Endothelial cell of umbilical vein (primary cell): ENCODE measurements at regions of chr15 and their contacts with region 1.

Region 1: DNA sequence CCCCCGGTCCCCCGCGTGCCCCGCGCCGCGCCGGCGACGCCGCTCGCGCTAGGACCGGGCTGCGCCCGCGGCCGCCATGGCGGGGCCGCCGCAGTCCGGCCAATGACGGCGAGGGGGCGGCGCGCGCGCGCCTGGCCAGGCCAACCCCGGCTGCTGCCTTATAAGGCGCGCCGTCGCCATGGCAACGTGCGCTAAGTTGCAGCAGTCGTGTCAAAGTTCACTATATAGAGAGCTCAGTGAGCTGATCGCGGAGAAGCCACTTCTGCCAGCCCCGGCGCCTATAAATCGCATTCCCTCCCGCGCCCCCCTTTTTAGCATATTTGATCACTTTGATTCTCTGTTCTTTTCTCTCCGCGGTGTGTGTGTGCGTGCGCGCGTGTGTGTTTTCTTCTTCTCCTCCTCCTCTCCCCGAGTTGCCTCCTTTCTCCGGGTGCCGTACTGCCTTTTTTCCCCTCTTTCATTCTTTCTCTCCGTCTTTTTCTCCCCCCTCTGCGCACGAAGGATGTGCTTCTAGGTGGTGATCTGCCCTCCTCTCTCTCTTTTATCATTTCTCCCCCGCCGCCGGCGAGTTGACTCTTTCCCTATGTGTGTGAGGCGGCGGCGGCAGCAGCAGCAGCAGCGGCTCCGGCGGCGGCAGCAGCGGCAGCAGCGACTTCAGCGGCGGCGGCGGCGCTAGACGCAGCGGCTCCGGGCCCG is at the start of gene NR2F2:
- DNase-seq: peak; percentile 98
- H3K4me3 ChIP-seq: peak within 1 kb of the TSS; percentile 92 to 99 (median 99)
- H3K27ac ChIP-seq: peak within 1 kb of the TSS; percentile 92
- H3K4me1 ChIP-seq: peaks cover 22% of the 10 kb centered on the region
- H3K27me3 ChIP-seq: no peaks in the 10 kb centered on the region
- CTCF ChIP-seq: no peak
- POLR2A ChIP-seq: peak; percentile 99
- total RNA-seq, gene NR2F2: 153 and 182 TPM in 2 replicates

Region 2: GRCh38 chr15:94607176-94607654 is 1723.4 kb before region 1 on chr15:
- CTCF ChIA-PET with region 1: no interaction called
- POLR2A ChIA-PET with region 1: no interaction called
- dilution Hi-C with region 1: no loop called
- intact Hi-C with region 1: loop called (anchors 1 kb)
- DNase-seq: peak; percentile 96
- H3K4me3 ChIP-seq: no peak overlapping the region
- H3K27ac ChIP-seq: peak overlapping the region; percentile 97
- H3K4me1 ChIP-seq: peaks cover 40% of the 10 kb centered on the region
- H3K27me3 ChIP-seq: no peaks in the 10 kb centered on the region
- CTCF ChIP-seq: no peak
- POLR2A ChIP-seq: peak; percentile 75

Region 3: DNA sequence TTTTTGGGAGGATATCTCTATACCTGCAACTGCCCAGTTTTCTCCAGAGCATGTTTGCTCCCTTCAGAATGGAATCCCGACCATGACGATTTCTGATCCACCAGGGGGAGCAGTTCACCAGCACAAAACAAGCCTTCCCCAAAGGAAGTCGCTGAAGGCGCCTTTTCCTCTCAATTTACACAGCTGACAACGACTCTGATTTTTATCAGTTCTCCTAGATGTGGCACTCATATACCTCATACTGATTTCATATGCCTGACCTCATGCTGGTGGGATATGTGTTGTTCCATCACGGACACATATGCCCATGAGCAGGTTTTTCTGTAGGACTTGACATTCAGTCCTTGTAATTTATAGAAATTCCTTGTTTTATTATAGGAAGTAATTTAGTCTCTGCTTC is 1071.1 kb before region 1 on chr15:
- CTCF ChIA-PET with region 1: interaction called, 31 read pairs
- POLR2A ChIA-PET with region 1: interaction called, 14 read pairs
- dilution Hi-C with region 1: no loop called
- intact Hi-C with region 1: loop called (anchors 1 kb)
- DNase-seq: peak; percentile 92
- H3K4me3 ChIP-seq: no peak overlapping the region
- H3K27ac ChIP-seq: peak overlapping the region; percentile 89
- H3K4me1 ChIP-seq: peaks cover 46% of the 10 kb centered on the region
- H3K27me3 ChIP-seq: no peaks in the 10 kb centered on the region
- CTCF ChIP-seq: peak; percentile 71
- POLR2A ChIP-seq: no peak

Region 4: GRCh38 chr15:95459273-95459672 is 871.3 kb before region 1 on chr15:
- CTCF ChIA-PET with region 1: interaction called, 3 read pairs
- POLR2A ChIA-PET with region 1: no interaction called
- dilution Hi-C with region 1: no loop called
- intact Hi-C with region 1: loop called (anchors 2 kb)
- DNase-seq: peak; percentile 90
- H3K4me3 ChIP-seq: peak overlapping the region in 1 of 3 experiments; percentile 51
- H3K27ac ChIP-seq: peak overlapping the region; percentile 85
- H3K4me1 ChIP-seq: peaks cover 41% of the 10 kb centered on the region
- H3K27me3 ChIP-seq: no peaks in the 10 kb centered on the region
- CTCF ChIP-seq: no peak
- POLR2A ChIP-seq: peak; percentile 65

Region 5: GRCh38 chr15:95812491-95812890 is 518.1 kb before region 1 on chr15:
- CTCF ChIA-PET with region 1: no interaction called
- POLR2A ChIA-PET with region 1: no interaction called
- dilution Hi-C with region 1: no loop called
- intact Hi-C with region 1: loop called (anchors 1 kb)
- DNase-seq: peak; percentile 84
- H3K4me3 ChIP-seq: no peak overlapping the region
- H3K27ac ChIP-seq: peak overlapping the region; percentile 42
- H3K4me1 ChIP-seq: peaks cover 9% of the 10 kb centered on the region
- H3K27me3 ChIP-seq: no peaks in the 10 kb centered on the region
- CTCF ChIP-seq: no peak
- POLR2A ChIP-seq: no peak

Region 6: GRCh38 chr15:96273317-96274086 is 57.1 kb before region 1 on chr15:
- CTCF ChIA-PET with region 1: interaction called, 16 read pairs
- POLR2A ChIA-PET with region 1: interaction called, 23 read pairs
- dilution Hi-C with region 1: no loop called
- intact Hi-C with region 1: no loop called
- DNase-seq: peak; percentile 94
- H3K4me3 ChIP-seq: no peak overlapping the region
- H3K27ac ChIP-seq: peak overlapping the region; percentile 90
- H3K4me1 ChIP-seq: peaks cover 41% of the 10 kb centered on the region
- H3K27me3 ChIP-seq: no peaks in the 10 kb centered on the region
- CTCF ChIP-seq: no peak
- POLR2A ChIP-seq: peak; percentile 84

Region 7: GRCh38 chr15:96285305-96285704 is 45.3 kb before region 1 on chr15:
- CTCF ChIA-PET with region 1: no interaction called
- POLR2A ChIA-PET with region 1: no interaction called
- dilution Hi-C with region 1: no loop called
- intact Hi-C with region 1: no loop called
- DNase-seq: no peak
- H3K4me3 ChIP-seq: no peak overlapping the region
- H3K27ac ChIP-seq: no peak overlapping the region
- H3K4me1 ChIP-seq: no peaks in the 10 kb centered on the region
- H3K27me3 ChIP-seq: no peaks in the 10 kb centered on the region
- CTCF ChIP-seq: no peak
- POLR2A ChIP-seq: no peak

Region 8: DNA sequence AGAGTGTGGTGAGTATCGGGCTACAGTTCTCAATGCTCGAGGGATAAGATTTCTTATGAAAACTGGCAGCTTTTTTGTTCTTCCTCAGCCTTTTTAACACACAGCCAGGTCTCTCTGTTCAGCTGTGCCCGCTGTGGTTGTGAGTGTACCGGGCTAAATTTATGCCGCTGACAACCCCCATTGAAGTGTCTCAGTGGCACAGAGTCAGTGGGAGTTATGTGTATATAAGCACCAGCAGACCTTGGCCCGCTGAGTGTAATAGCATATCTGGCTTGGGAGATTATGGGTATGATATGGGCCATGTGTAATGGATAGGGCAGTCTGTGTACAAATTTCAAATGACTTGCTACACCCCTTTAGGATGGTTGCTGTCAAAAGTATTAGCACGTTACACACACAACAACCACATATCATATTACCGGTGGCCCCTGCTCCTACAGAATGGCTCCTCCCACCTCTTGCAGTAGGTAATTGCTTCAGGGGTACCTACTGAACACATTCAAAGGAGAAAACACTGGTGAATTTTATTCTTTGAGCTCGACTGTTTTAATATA is 27.0 kb before region 1 on chr15:
- CTCF ChIA-PET with region 1: no interaction called
- POLR2A ChIA-PET with region 1: no interaction called
- dilution Hi-C with region 1: no loop called
- intact Hi-C with region 1: no loop called
- DNase-seq: no peak
- H3K4me3 ChIP-seq: no peak overlapping the region
- H3K27ac ChIP-seq: no peak overlapping the region
- H3K4me1 ChIP-seq: no peaks in the 10 kb centered on the region
- H3K27me3 ChIP-seq: no peaks in the 10 kb centered on the region
- CTCF ChIP-seq: no peak
- POLR2A ChIP-seq: no peak

Region 9: GRCh38 chr15:96416934-96417759 is 86.5 kb after region 1 on chr15:
- CTCF ChIA-PET with region 1: no interaction called
- POLR2A ChIA-PET with region 1: no interaction called
- dilution Hi-C with region 1: no loop called
- intact Hi-C with region 1: no loop called
- DNase-seq: peak; percentile 47
- H3K4me3 ChIP-seq: peak overlapping the region; percentile 23 to 44 (median 29)
- H3K27ac ChIP-seq: no peak overlapping the region
- H3K4me1 ChIP-seq: peaks cover 21% of the 10 kb centered on the region
- H3K27me3 ChIP-seq: peaks cover 8 to 16% of the 10 kb centered on the region in 2 experiments
- CTCF ChIP-seq: no peak
- POLR2A ChIP-seq: no peak

Region 10: DNA sequence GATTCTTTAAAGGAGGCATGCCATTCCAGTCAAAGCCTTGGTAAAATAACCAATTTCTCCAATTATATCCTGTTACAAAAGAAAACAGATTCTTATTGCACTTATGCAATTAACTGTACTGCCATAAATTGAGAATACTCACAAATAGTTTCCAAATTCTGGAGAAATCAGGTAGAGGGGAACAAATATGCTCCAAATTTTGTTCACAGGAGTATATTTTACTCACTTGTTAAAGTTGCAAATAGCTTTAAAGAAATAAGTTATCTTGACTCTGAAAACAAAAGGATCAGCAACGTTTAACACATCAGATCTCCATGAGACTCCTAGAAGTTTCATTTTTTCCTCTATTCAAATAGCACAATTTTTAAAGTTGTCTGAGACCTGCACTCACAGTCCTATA is 917.8 kb after region 1 on chr15:
- CTCF ChIA-PET with region 1: interaction called, 15 read pairs
- POLR2A ChIA-PET with region 1: no interaction called
- dilution Hi-C with region 1: no loop called
- intact Hi-C with region 1: loop called (anchors 2 kb)
- DNase-seq: no peak
- H3K4me3 ChIP-seq: no peak overlapping the region
- H3K27ac ChIP-seq: no peak overlapping the region
- H3K4me1 ChIP-seq: no peaks in the 10 kb centered on the region
- H3K27me3 ChIP-seq: no peaks in the 10 kb centered on the region
- CTCF ChIP-seq: no peak
- POLR2A ChIP-seq: no peak